Left ventricle myocardium inferior (tissue), 1 donor: ENCODE measurements at regions of chr2 and their contacts with region 1.

Region 1: DNA sequence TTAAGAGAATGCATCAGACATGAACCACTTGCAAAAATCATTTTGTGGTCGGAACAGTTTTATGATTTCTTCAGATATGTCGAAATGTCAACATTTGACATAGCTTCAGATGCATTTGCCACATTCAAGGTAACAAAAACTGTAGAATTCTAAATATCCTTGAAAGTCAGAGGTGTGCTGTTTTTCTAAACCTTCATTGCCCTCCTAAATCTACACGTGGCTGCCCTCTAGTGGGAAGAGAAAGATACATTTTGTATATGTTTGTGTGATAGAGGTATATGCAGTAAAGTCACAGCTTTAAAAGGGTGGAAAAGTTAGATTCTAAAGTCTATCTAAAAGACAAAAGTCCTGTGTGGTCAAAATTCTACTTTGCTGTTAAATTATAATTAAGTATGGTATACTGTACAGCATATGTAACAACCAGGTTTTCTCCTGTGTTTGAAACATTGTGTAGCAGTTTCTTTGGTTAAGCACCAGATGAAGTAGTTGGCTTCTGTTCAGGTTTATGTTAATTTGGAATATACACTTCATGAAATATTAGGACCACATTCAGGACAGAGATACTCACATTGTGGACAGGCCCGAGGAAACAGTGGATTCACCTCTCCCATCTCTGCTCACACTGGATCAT is 65.9 kb upstream of the ITM2C start:
- DNase-seq: no peak
- H3K4me3 ChIP-seq: no peak overlapping the region
- H3K27ac ChIP-seq: no peak overlapping the region
- H3K4me1 ChIP-seq: peaks cover 45% of the 10 kb centered on the region
- H3K27me3 ChIP-seq: no peaks in the 10 kb centered on the region
- CTCF ChIP-seq: peak; percentile 69

Region 2: GRCh38 chr2:230712443-230713330 is 86.2 kb before region 1 on chr2 and contains the start of gene CAB39:
- intact Hi-C with region 1: loop called (anchors 5 kb)
- DNase-seq: peak; percentile 89
- H3K4me3 ChIP-seq: peak within 1 kb of the TSS; percentile 98
- H3K27ac ChIP-seq: peak within 1 kb of the TSS; percentile 95
- H3K4me1 ChIP-seq: peaks cover 56% of the 10 kb centered on the region
- H3K27me3 ChIP-seq: no peaks in the 10 kb centered on the region
- CTCF ChIP-seq: peak; percentile 93
- total RNA-seq, gene CAB39: 92.2 TPM

Region 3: DNA sequence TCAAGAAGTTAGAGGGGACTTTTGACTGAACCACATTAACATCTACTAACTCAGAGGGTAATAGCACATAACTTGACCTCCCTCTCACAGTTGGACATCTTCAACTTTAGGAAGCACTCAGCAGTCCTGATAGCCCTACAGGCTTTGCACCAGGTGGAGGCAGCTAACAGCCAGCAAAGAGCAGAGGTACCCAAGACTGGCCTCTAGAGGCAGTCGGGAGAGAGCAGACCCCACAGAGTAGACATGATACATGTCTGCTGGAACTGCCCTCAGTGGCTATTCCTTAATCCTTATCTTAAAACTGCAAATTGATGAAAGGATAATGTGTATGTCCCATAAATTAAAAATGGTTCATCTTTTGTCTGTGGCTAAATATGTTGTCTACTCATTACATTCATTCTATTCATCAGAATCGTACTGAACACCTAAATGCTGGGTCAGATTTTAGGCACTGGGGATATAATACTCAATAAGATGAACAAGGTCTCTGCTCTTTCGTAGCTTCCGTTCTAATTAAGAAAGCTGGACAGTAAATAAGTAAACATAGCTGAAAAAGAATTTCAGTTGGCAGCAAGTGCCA is 36.5 kb before region 1 on chr2:
- intact Hi-C with region 1: no loop called
- DNase-seq: no peak
- H3K4me3 ChIP-seq: no peak overlapping the region
- H3K27ac ChIP-seq: no peak overlapping the region
- H3K4me1 ChIP-seq: peaks cover 46% of the 10 kb centered on the region
- H3K27me3 ChIP-seq: no peaks in the 10 kb centered on the region
- CTCF ChIP-seq: peak; percentile 47